OCI-LY7 (cell line): ENCODE measurements at regions of chr6 and their contacts with region 1.

Region 1: GRCh38 chr6:24494821-24495795 is at the start of gene ALDH5A1:
- DNase-seq: peak; percentile 92
- H3K4me3 ChIP-seq: peak within 1 kb of the TSS; percentile 92
- H3K27ac ChIP-seq: peak within 1 kb of the TSS; percentile 84
- H3K4me1 ChIP-seq: peaks cover 55% of the 10 kb centered on the region
- CTCF ChIP-seq: peak; percentile 65
- total RNA-seq, gene ALDH5A1: 180 and 199 TPM in 2 replicates

Region 2: DNA sequence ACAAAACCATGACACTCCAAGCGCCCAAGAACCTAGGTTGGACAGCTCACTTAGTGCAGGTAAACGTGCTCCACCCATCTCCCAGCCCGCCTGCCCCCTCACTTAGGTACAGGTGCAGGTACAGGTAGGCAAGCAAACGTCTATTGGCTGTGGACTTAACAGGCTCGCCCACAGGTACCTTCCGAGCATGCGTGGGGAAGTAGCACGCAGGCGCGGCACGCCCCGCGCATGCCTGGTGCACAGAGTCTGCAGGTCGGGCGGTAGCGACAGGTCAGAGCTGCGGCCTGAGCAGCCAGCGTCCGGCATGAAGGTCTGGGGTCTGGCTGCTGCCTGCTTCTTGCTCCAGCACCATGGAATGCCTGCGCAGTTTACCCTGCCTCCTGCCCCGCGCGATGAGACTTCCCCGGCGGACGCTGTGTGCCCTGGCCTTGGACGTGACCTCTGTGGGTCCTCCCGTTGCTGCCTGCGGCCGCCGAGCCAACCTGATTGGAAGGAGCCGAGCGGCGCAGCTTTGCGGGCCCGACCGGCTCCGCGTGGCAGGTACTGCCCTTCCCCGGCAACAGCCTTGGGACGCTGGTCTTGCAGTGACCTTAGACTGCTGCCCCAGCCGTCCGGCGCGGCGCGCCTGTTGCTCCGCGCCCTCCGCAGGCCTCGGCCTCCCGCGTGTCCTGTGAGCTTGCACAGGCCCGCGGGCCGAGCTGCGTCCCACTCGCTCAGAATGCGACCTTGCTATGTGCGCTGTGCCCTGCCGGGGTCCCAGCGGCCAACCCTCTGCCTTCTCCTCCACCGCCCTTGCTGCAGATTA is 92.2 kb before region 1 on chr6 and contains the start of gene MRS2:
- CTCF ChIA-PET with region 1: no interaction called
- POLR2A ChIA-PET with region 1: no interaction called
- intact Hi-C with region 1: no loop called
- DNase-seq: no peak
- H3K4me3 ChIP-seq: no peak within 1 kb of the TSS
- H3K27ac ChIP-seq: no peak within 1 kb of the TSS
- H3K4me1 ChIP-seq: peaks cover 4% of the 10 kb centered on the region
- CTCF ChIP-seq: no peak
- total RNA-seq, gene MRS2: not detected in 2 replicates

Region 3: DNA sequence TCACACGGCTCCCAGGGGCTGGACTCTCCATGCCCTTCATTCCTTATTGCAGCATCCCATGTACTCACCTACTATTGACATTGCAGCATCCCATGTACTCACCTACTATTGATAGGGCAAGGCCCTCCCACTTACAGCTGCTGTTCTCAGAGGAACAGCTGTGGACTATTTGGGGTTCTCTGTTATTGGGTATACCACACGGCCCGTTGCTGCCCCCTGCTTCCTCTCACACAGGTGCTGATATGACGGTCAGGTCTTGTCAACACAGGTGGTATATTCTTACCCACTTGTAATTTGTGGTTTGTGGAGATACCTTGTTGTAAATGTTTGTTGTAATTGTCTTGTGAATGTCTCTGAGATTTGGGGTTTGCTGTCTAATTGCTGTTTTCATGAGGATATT is 18.5 kb after region 1 on chr6:
- CTCF ChIA-PET with region 1: interaction called, 15 read pairs
- POLR2A ChIA-PET with region 1: interaction called, 586 read pairs
- intact Hi-C with region 1: loop called (anchors 1 kb)
- DNase-seq: peak; percentile 93
- H3K4me3 ChIP-seq: peak overlapping the region; percentile 24
- H3K27ac ChIP-seq: peak overlapping the region; percentile 83
- H3K4me1 ChIP-seq: peaks cover 77% of the 10 kb centered on the region
- CTCF ChIP-seq: peak; percentile 60; the same call in 1 of the 2 replicates

Region 4: GRCh38 chr6:24574809-24575208 is 79.7 kb after region 1 on chr6:
- CTCF ChIA-PET with region 1: no interaction called
- POLR2A ChIA-PET with region 1: interaction called, 4 read pairs
- intact Hi-C with region 1: loop called (anchors 2 kb)
- DNase-seq: peak; percentile 77
- H3K4me3 ChIP-seq: no peak overlapping the region
- H3K27ac ChIP-seq: no peak overlapping the region
- H3K4me1 ChIP-seq: peaks cover 18% of the 10 kb centered on the region
- CTCF ChIP-seq: peak; percentile 35; the same call in 1 of the 2 replicates

Region 5: DNA sequence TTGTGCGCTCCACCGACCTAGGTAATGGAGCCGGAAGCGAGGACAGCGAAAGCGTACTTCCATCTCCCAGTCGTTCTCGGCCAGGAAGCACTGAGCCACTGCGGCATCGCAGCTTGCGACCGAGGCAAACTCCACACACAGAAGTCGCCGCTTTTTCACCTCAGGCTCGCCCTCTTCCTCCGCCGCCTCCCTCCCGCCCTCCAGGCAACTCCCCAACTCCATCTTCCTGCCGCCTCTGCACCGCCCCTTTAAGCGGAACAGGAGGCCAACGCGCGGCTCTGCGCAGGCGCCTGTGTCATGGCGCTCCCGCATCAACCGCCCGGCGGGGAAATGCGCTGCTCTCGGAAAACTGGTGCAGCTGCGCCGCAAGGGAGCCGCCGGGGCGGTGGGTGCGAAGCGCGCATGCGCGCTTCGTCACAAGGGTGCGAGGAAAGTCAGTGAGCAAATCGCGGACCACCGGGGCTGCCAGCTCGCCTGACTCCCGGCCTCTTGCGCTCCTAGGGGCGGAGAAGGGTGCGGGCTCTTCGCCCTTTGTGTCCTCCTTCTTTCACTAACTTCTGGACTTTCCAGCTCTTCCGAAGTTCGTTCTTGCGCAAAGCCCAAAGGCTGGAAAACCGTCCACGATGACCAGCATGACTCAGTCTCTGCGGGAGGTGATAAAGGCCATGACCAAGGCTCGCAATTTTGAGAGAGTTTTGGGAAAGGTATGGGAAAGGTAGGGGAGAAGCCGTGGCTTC is 171.7 kb after region 1 on chr6 and contains the starts of genes ACOT13 and TDP2:
- CTCF ChIA-PET with region 1: no interaction called
- POLR2A ChIA-PET with region 1: interaction called, 3 read pairs
- intact Hi-C with region 1: loop called (anchors 1 kb)
- DNase-seq: peak; percentile 98
- H3K4me3 ChIP-seq: peak within 1 kb of the TSS; percentile 98
- H3K27ac ChIP-seq: peak within 1 kb of the TSS; percentile 82
- H3K4me1 ChIP-seq: peaks cover 25% of the 10 kb centered on the region
- CTCF ChIP-seq: peak; percentile 70
- total RNA-seq, gene ACOT13: 4.1 and 6.7 TPM in 2 replicates
- total RNA-seq, gene TDP2: 22.5 and 27.2 TPM in 2 replicates

Region 6: GRCh38 chr6:24774696-24775519 is 279.8 kb after region 1 on chr6 and contains the start of gene GMNN:
- CTCF ChIA-PET with region 1: no interaction called
- POLR2A ChIA-PET with region 1: no interaction called
- intact Hi-C with region 1: loop called (anchors 10 kb)
- DNase-seq: peak; percentile 98
- H3K4me3 ChIP-seq: peak within 1 kb of the TSS; percentile 95
- H3K27ac ChIP-seq: peak within 1 kb of the TSS; percentile 94
- H3K4me1 ChIP-seq: peaks cover 36% of the 10 kb centered on the region
- CTCF ChIP-seq: no peak
- total RNA-seq, gene GMNN: 101 and 130 TPM in 2 replicates

Region 7: DNA sequence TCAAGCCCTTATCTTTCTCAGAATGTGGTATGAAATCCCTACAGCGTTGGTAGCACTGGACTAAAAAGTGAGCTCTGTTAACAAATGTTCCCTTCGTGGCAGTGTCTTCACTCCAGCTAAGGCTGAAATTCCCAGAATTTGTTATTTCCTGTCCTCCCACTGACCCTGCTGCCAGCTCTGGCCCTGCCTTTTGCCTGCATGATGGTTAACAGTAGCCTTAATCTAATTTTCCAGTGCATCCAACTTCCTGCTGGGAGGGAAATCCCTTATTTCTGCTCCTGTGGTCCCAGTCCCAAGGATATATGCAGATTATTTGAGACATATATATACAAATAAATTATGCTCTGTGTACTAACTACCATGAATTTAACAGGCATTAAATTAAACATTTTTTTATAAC is 626.9 kb after region 1 on chr6:
- CTCF ChIA-PET with region 1: no interaction called
- POLR2A ChIA-PET with region 1: no interaction called
- intact Hi-C with region 1: no loop called
- DNase-seq: no peak
- H3K4me3 ChIP-seq: no peak overlapping the region
- H3K27ac ChIP-seq: no peak overlapping the region
- H3K4me1 ChIP-seq: no peaks in the 10 kb centered on the region
- CTCF ChIP-seq: no peak

Region 8: GRCh38 chr6:25138237-25139125 is 643.4 kb after region 1 on chr6:
- CTCF ChIA-PET with region 1: no interaction called
- POLR2A ChIA-PET with region 1: no interaction called
- intact Hi-C with region 1: loop called (anchors 10 kb)
- DNase-seq: peak; percentile 75
- H3K4me3 ChIP-seq: peak overlapping the region; percentile 51
- H3K27ac ChIP-seq: peak overlapping the region; percentile 34
- H3K4me1 ChIP-seq: peaks cover 24% of the 10 kb centered on the region
- CTCF ChIP-seq: peak; percentile 37; the same call in 1 of the 2 replicates